H1 (cell line): ENCODE measurements at regions of chr7 and their contacts with region 1.

Region 1: DNA sequence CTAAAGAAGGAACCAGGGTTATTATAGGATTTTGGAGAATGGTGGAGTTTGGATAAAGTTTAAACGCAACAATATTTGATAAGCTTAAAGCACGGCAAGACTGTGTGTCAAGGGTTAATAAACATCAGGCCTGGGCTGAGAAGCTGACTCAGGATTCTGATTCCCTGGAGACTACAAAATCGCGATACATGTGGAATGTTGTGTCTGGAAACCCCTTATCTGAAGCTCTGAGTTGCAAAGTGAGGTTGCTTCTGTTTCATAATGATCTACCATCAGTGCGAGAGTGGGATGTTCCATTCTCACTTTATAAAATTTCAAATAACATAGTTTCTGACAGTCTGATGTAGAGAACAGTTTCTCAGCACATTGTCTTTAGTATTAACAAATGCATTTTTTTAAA is 7.8 kb downstream of the C1GALT1 start:
- DNase-seq: no peak
- H3K4me3 ChIP-seq: peak overlapping the region in 1 of 4 experiments; percentile 27; a peak in 1 of 8 replicates
- H3K27ac ChIP-seq: no peak overlapping the region
- H3K4me1 ChIP-seq: peaks cover 0 to 10% (median 5%) of the 10 kb centered on the region in 4 experiments; a peak in 4 of 7 replicates
- H3K27me3 ChIP-seq: no peaks in the 10 kb centered on the region
- CTCF ChIP-seq: no peak
- EP300 ChIP-seq: no peak
- POLR2A ChIP-seq: no peak
- RAD21 ChIP-seq: no peak

Region 2: DNA sequence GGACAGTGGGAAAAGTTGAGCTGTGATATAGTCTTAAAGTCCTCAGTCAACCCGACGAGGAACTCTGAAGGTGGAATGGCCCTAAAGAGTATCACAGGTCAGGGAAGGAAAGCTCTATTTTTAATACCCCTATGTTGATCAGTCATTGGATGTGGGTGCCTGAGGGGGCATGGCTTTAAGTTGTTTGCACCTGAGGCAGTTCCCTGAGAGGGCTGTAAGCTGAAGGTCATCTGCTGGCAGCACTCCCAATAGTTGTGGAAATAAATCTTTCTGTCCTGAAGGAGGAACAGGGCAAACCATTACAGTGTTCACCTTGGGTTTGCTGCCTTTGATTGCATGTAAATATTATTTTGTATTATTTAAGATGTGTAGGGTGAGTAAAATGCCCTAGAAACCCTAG is 25.6 kb before region 1 on chr7:
- CTCF ChIA-PET with region 1: no interaction called
- POLR2A ChIA-PET with region 1: no interaction called
- DNase-seq: no peak
- H3K4me3 ChIP-seq: no peak overlapping the region
- H3K27ac ChIP-seq: no peak overlapping the region
- H3K4me1 ChIP-seq: no peaks in the 10 kb centered on the region
- H3K27me3 ChIP-seq: no peaks in the 10 kb centered on the region
- CTCF ChIP-seq: no peak
- EP300 ChIP-seq: no peak
- POLR2A ChIP-seq: no peak
- RAD21 ChIP-seq: no peak

Region 3: DNA sequence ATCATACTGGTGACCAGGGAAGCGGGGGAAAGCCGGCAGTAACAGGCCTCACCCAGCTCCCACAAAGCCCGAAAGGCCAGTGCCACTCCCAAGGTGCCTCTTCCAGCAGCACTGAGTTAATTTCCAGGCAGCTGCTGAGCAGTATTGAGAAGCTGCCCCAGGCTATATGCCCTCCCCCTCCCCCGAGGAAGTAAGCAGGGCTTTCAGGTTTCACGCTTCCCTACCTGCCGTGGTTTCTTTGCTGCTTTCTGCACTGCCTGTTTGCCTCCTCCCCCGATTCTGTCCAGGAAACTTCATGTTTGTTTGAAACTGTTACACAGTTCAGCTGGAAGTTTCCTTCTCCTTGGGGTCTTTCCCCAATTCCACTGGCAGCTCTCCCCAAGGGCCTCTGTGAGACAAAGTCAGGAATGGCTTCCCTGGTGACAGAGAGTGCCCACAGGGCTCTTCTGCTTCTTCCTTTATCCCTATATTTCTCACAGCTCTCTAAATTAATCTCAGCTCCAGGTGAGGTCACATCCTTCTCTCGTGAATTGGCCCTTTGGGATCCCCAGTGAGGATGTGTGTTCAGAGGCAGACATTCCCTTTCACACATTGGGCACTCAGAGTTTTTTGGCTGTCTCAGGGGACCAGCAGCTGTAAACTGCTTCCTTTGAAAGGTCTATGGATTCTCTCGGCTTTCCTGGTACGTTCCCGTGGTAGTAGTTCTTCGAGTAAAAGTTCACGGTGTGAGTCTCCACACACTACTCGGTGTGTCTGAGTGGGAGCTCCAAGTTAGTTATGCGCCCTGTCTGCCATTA is 11.6 kb after region 1 on chr7:
- CTCF ChIA-PET with region 1: interaction called, 4 read pairs
- POLR2A ChIA-PET with region 1: interaction called, 11 read pairs
- DNase-seq: peak in 1 of 2 experiments; percentile 59
- H3K4me3 ChIP-seq: peak overlapping the region in 1 of 4 experiments; percentile 11; a peak in 1 of 8 replicates
- H3K27ac ChIP-seq: peak overlapping the region; percentile 27
- H3K4me1 ChIP-seq: peaks cover 4 to 32% (median 8%) of the 10 kb centered on the region in 4 experiments
- H3K27me3 ChIP-seq: no peaks in the 10 kb centered on the region
- CTCF ChIP-seq: no peak
- EP300 ChIP-seq: no peak
- POLR2A ChIP-seq: no peak; a peak in 1 of 3 replicates
- RAD21 ChIP-seq: no peak